K562 (cell line): ENCODE measurements at regions of chr7 and their contacts with region 1.

Region 1: GRCh38 chr7:135930565-135931461 is 46.3 kb downstream of the MTPN start:
- DNase-seq: no peak
- ATAC-seq: peak; percentile 3; the same call in 1 of the 3 replicates
- H3K4me3 ChIP-seq: no peak overlapping the region
- H3K27ac ChIP-seq: no peak overlapping the region
- H3K4me1 ChIP-seq: peaks cover 21 to 53% of the 10 kb centered on the region in 2 experiments
- H3K27me3 ChIP-seq: no peaks in the 10 kb centered on the region
- CTCF ChIP-seq: no peak
- EP300 ChIP-seq: no peak
- POLR2A ChIP-seq: 0 out of 2 replicates have a peak, but pooled peaks have one; percentile 37
- RAD21 ChIP-seq: no peak

Region 2: DNA sequence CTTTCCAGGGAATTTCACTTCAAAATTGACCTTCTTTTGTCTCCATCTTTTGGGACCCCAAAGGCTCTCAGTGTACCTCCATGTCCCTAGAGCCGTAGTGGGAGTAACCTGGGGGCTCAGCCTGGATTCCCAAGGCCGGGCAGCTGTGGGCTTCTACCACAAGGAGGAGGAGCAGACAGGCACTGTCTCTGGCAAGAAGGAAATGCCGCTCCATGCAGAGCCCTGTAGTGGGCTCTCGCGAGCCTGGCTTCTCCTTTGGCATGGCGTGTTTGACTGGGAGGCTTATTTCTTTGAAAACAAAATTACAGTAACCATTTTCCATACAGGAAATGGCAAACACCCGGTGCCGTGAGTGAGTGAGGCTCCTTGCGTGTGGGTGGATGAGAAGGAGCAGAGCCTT is 105.4 kb before region 1 on chr7:
- CTCF ChIA-PET with region 1: no interaction called
- POLR2A ChIA-PET with region 1: no interaction called
- in situ Hi-C with region 1: no loop called
- intact Hi-C with region 1: loop called (anchors 5 kb)
- DNase-seq: peak in 2 of 4 experiments; percentile 55 to 61
- ATAC-seq: peak; percentile 93
- H3K4me3 ChIP-seq: no peak overlapping the region
- H3K27ac ChIP-seq: no peak overlapping the region
- H3K4me1 ChIP-seq: peaks cover 0 to 4% of the 10 kb centered on the region in 2 experiments; a peak in 1 of 5 replicates
- H3K27me3 ChIP-seq: peaks cover 49 to 84% of the 10 kb centered on the region in 2 experiments; a peak in 4 of 5 replicates
- CTCF ChIP-seq: peak; percentile 77 to 98 (median 97)
- EP300 ChIP-seq: no peak
- POLR2A ChIP-seq: no peak
- RAD21 ChIP-seq: peak; percentile 84 to 85

Region 3: DNA sequence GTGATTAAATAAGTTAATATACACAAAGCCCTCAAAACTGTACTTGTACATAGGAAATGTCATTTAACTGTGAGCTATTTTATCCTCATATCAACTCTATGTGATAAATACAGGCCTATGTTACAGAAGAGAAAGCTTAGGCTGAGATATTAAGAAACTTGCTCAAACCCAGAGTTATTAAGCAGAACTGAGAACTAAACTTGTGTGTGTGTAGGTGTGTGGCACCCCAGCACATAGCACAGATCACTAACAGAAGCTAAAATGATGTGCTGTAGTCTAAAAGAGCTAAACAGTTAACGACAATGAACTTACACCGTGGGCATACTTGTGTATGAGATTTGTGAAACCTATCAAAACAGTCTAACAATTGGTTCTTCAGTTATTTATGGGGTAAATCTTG is 11.8 kb after region 1 on chr7:
- CTCF ChIA-PET with region 1: no interaction called
- POLR2A ChIA-PET with region 1: interaction called, 45 read pairs
- in situ Hi-C with region 1: no loop called
- intact Hi-C with region 1: no loop called
- DNase-seq: no peak
- ATAC-seq: peak; percentile 28
- H3K4me3 ChIP-seq: no peak overlapping the region
- H3K27ac ChIP-seq: peak overlapping the region; percentile 74
- H3K4me1 ChIP-seq: peaks cover 23 to 77% of the 10 kb centered on the region in 2 experiments
- H3K27me3 ChIP-seq: no peaks in the 10 kb centered on the region
- CTCF ChIP-seq: no peak
- EP300 ChIP-seq: no peak
- POLR2A ChIP-seq: no peak
- RAD21 ChIP-seq: no peak

Region 4: GRCh38 chr7:135977007-135977741 is 46.4 kb after region 1 on chr7 and contains the start of gene MTPN:
- CTCF ChIA-PET with region 1: no interaction called
- POLR2A ChIA-PET with region 1: interaction called, 4 read pairs
- in situ Hi-C with region 1: no loop called
- intact Hi-C with region 1: loop called (anchors 10 kb)
- DNase-seq: peak; percentile 99 to 100 (median 99)
- ATAC-seq: peak; percentile 90
- H3K4me3 ChIP-seq: peak within 1 kb of the TSS; percentile 83
- H3K27ac ChIP-seq: peak within 1 kb of the TSS; percentile 78
- H3K4me1 ChIP-seq: peaks cover 19 to 61% of the 10 kb centered on the region in 2 experiments
- H3K27me3 ChIP-seq: no peaks in the 10 kb centered on the region
- CTCF ChIP-seq: no peak; a peak in 1 of 6 replicates
- EP300 ChIP-seq: no peak; the same call in 1 of the 2 replicates
- POLR2A ChIP-seq: peak; percentile 94
- RAD21 ChIP-seq: no peak; a peak in 1 of 4 replicates
- polyA plus RNA-seq, gene MTPN: 68.5 to 68.6 TPM